ENCODE measurements at regions of chr7 and their contacts with region 1.

Region 1: GRCh38 chr7:74217455-74218342 is 7.9 kb downstream of the LAT2 start:
- DNase-seq: peak; percentile 81
- ATAC-seq: peak; percentile 63
- H3K4me3 ChIP-seq: no peak overlapping the region
- H3K27ac ChIP-seq: peak overlapping the region; percentile 95
- H3K4me1 ChIP-seq: peaks cover 42% of the 10 kb centered on the region
- H3K27me3 ChIP-seq: no peaks in the 10 kb centered on the region
- CTCF ChIP-seq: no peak
- EP300 ChIP-seq: peak; percentile 51 to 82; a peak in 3 of 4 replicates
- POLR2A ChIP-seq: peak; percentile 58
- RAD21 ChIP-seq: no peak

Region 2: DNA sequence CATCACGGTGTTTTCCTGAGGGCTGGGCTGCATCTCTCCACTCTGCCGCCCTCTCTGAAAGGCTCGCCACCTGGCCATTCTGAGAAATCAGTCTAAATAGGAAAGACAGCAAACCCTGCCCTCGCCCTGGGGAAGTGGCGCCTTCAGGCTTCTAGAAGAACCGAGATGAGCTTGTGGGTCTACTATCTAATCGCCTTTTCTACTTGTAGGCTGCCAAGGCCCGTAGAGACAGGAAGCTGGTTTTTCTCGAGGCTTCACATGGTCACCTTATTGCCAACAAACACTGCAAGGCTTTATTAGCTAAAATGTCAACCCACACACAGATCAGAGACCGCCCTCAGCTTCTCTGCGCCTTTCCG is 13.5 kb after region 1 on chr7:
- CTCF ChIA-PET with region 1: interaction called, 12 read pairs
- POLR2A ChIA-PET with region 1: interaction called, 37 read pairs
- RAD21 ChIA-PET with region 1: interaction called, 36 read pairs
- SMC1A ChIA-PET with region 1: interaction called, 21 read pairs
- in situ Hi-C with region 1: no loop called
- intact Hi-C with region 1: no loop called
- DNase-seq: peak; percentile 78
- ATAC-seq: peak; percentile 88
- H3K4me3 ChIP-seq: no peak overlapping the region
- H3K27ac ChIP-seq: peak overlapping the region; percentile 77
- H3K4me1 ChIP-seq: peaks cover 42% of the 10 kb centered on the region
- H3K27me3 ChIP-seq: no peaks in the 10 kb centered on the region
- CTCF ChIP-seq: no peak
- EP300 ChIP-seq: no peak
- POLR2A ChIP-seq: peak; percentile 35
- RAD21 ChIP-seq: no peak; the same call in 1 of the 2 replicates

Region 3: DNA sequence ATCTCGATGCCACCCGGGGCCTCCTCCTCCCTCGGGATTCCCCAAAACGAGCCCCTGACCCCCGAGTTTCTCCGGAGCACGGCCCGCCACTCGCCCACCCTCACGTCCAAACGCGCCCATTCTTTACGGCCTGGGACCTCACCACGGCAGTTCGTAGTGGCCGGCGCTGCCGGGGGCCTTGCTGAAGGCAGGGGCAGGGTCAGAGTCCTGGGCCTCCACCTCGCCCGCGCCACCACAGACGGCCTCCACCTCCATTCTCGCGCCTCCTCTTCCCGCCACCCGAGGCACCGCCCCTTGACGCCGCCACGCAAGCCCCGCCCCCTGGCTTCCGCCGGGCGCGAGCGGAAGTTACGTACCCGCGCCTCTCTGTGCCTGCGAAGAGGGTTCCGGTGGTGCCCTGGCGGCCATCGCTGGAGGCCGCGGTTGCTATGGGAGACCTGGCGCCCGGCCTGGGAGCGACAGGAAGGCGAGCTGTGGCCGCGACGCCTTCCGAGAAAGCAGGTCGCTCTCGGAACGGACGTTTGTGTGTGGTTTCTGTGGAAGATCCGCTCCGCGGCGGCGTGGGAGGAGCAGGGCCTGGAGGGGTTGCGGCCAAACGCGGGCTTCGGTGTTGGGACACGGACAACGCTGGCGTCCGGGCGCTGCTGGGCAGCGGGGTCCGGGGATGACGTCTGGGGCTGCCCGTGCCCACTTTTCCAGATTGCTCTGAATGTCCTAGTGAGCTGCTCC is 36.6 kb after region 1 on chr7 and contains the start of gene RFC2:
- CTCF ChIA-PET with region 1: interaction called, 9 read pairs
- POLR2A ChIA-PET with region 1: interaction called, 3 read pairs
- RAD21 ChIA-PET with region 1: interaction called, 3 read pairs
- SMC1A ChIA-PET with region 1: interaction called, 8 read pairs
- in situ Hi-C with region 1: no loop called
- intact Hi-C with region 1: loop called (anchors 5 kb)
- DNase-seq: peak; percentile 96
- ATAC-seq: peak; percentile 94
- H3K4me3 ChIP-seq: peak within 1 kb of the TSS; percentile 86
- H3K27ac ChIP-seq: peak within 1 kb of the TSS; percentile 88
- H3K4me1 ChIP-seq: peaks cover 33% of the 10 kb centered on the region
- H3K27me3 ChIP-seq: no peaks in the 10 kb centered on the region
- CTCF ChIP-seq: peak in 1 of 3 experiments; percentile 17; a peak in 1 of 6 replicates
- EP300 ChIP-seq: peak; percentile 19 to 45; a peak in 2 of 4 replicates
- POLR2A ChIP-seq: peak; percentile 96
- RAD21 ChIP-seq: no peak
- polyA plus RNA-seq, gene RFC2: 25.8 to 45.2 TPM

Region 4: GRCh38 chr7:74289018-74289658 is 71.4 kb after region 1 on chr7 and contains the start of gene CLIP2:
- CTCF ChIA-PET with region 1: interaction called, 10 read pairs
- POLR2A ChIA-PET with region 1: interaction called, 21 read pairs
- RAD21 ChIA-PET with region 1: interaction called, 41 read pairs
- SMC1A ChIA-PET with region 1: interaction called, 14 read pairs
- in situ Hi-C with region 1: no loop called
- intact Hi-C with region 1: loop called (anchors 2 kb)
- DNase-seq: no peak
- ATAC-seq: peak; percentile 49
- H3K4me3 ChIP-seq: peak within 1 kb of the TSS; percentile 97
- H3K27ac ChIP-seq: peak within 1 kb of the TSS; percentile 93
- H3K4me1 ChIP-seq: peaks cover 44% of the 10 kb centered on the region
- H3K27me3 ChIP-seq: no peaks in the 10 kb centered on the region
- CTCF ChIP-seq: no peak
- EP300 ChIP-seq: no peak
- POLR2A ChIP-seq: peak; percentile 75
- RAD21 ChIP-seq: 0 out of 2 replicates have a peak, but pooled peaks have one; percentile 5
- polyA plus RNA-seq, gene CLIP2: 0.26 to 0.82 TPM

Region 5: GRCh38 chr7:74294191-74294998 is 76.7 kb after region 1 on chr7:
- CTCF ChIA-PET with region 1: interaction called, 10 read pairs
- POLR2A ChIA-PET with region 1: interaction called, 14 read pairs
- RAD21 ChIA-PET with region 1: interaction called, 41 read pairs
- SMC1A ChIA-PET with region 1: interaction called, 4 read pairs
- in situ Hi-C with region 1: no loop called
- intact Hi-C with region 1: no loop called
- DNase-seq: no peak
- ATAC-seq: no peak
- H3K4me3 ChIP-seq: peak overlapping the region; percentile 97; the same call in 1 of the 2 replicates
- H3K27ac ChIP-seq: no peak overlapping the region; the same call in 1 of the 2 replicates
- H3K4me1 ChIP-seq: peaks cover 23% of the 10 kb centered on the region
- H3K27me3 ChIP-seq: no peaks in the 10 kb centered on the region
- CTCF ChIP-seq: no peak
- EP300 ChIP-seq: no peak
- POLR2A ChIP-seq: no peak
- RAD21 ChIP-seq: no peak

Region 6: DNA sequence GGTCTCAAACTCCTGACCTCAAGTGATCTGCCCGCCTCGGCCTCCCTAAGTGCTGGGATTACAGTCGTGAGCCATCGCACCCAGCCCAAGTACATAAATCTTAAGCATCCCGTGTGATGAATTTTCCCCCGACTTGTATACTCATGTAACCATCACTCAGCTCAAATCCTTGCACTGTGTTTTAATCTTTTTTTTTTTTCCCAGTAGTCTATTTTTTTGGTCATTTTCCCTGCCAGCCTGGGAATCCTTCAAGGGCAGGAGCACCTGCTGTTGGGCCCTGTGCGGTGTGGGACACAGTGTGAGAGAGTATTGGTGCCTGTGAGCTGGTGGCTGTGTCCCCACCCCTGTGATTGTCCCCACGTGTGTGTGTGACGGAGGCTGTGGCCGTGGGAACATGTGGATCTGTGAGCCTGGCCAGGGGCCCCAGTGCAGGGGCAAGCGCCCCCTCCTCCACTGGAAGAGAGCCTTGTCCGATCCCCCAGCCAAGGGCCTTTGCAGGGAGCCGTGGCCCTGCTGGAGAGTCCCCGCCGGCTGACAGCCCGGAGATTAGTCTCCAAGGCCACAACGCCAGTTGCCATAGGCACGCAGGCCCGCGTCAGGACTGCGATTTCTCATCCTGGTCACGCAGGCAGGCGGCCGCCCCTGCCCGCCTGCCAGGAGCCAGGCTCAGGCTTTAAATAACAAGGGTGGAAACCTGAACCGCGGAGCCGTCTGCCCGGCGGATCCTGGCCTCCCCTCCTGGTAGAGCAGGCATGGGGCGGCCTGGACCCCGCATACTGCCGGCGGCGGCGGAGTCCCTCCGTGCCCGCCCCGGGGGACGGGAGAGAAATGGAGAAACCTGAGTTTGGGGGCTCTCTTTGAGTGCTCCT is 262.5 kb after region 1 on chr7:
- CTCF ChIA-PET with region 1: no interaction called
- POLR2A ChIA-PET with region 1: no interaction called
- RAD21 ChIA-PET with region 1: no interaction called
- SMC1A ChIA-PET with region 1: no interaction called
- in situ Hi-C with region 1: no loop called
- intact Hi-C with region 1: no loop called
- DNase-seq: no peak
- ATAC-seq: peak; percentile 64
- H3K4me3 ChIP-seq: no peak overlapping the region
- H3K27ac ChIP-seq: no peak overlapping the region
- H3K4me1 ChIP-seq: no peaks in the 10 kb centered on the region
- H3K27me3 ChIP-seq: peaks cover 0 to 3% of the 10 kb centered on the region in 2 experiments; a peak in 3 of 4 replicates
- CTCF ChIP-seq: no peak
- EP300 ChIP-seq: no peak
- POLR2A ChIP-seq: no peak
- RAD21 ChIP-seq: no peak

Measured in GM12878 (cell line).